ENCODE measurements at regions of chr5 and their contacts with region 1.

Region 1: DNA sequence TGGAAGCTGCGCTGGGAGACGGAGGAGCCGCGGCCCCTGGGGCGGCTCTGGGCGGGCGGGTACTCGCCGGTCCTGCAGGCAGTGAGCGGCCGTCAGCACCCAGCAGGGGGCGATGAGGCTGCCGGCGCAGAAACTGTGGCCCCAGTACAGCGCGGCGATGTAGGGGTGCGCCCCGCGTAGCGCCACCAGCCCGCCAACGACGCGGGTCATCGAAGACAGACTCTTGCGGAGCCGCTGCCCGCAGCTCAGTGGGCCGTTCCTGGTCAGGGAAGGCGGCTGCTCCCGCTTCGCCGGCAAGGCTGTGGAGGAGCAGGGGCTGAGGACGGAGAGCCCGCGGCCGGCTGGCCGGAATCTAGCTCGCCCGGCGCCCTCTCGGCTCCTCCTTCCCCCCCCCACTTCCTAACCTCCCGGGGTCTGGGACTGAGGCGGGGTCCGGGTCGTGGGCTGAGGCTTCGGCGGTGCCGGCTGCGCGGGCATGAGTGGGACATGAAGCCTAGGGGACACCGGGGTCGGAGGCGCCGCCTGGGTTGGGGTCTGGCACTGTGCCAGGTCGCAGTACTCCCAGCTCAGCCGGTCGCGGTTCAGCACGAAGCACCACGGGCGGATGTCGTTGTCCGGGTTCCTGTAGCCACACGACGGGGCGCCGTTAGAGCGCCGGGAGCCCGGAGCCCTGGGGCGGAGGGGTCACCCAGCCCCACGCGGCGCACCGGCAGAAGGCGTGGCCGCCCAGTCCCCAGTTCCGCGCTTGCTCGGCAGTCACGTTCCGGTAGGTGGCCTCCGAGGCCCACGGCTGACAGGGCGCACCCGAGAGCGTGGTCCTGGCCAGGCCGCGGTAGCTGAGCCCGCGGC is 3.6 kb upstream of the PFN3 start:
- DNase-seq: peak in 1 of 2 experiments; percentile 82
- H3K4me3 ChIP-seq: peak overlapping the region; percentile 9 to 65 (median 48); a peak in 7 of 8 replicates
- H3K27ac ChIP-seq: no peak overlapping the region
- H3K4me1 ChIP-seq: peaks cover 0 to 22% (median 14%) of the 10 kb centered on the region in 4 experiments; a peak in 5 of 7 replicates
- H3K27me3 ChIP-seq: peaks cover 22 to 68% (median 43%) of the 10 kb centered on the region in 4 experiments
- CTCF ChIP-seq: peak in 2 of 3 experiments; percentile 49 to 61; a peak in 3 of 4 replicates
- EP300 ChIP-seq: no peak
- POLR2A ChIP-seq: no peak
- RAD21 ChIP-seq: peak; percentile 48 to 74

Region 2: DNA sequence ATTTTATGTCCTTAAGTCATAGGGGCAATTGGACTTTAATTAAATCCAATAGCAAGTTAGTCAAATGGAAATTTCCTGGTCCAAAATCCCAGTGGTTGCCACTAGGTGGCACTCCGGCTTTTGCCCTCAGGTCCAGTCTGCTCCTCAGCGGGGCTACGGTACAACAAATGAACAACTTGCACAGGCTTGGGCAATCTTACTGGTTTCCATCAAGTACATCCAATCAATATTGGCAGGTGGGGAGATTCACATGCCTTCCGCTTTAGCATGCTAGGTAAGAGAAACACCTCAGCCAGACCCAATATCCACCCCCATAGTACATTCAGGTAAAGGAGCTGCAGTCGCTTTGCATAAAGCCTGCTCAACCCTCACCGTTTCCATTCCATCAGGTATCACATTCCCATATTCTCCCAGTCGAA is 86.0 kb before region 1 on chr5:
- CTCF ChIA-PET with region 1: interaction called, 31 read pairs
- POLR2A ChIA-PET with region 1: no interaction called
- DNase-seq: peak in 1 of 2 experiments; percentile 87
- H3K4me3 ChIP-seq: no peak overlapping the region
- H3K27ac ChIP-seq: no peak overlapping the region
- H3K4me1 ChIP-seq: peaks cover 0 to 4% (median 1%) of the 10 kb centered on the region in 4 experiments; a peak in 4 of 7 replicates
- H3K27me3 ChIP-seq: no peaks in the 10 kb centered on the region
- CTCF ChIP-seq: peak in 2 of 3 experiments; percentile 85 to 89; a peak in 3 of 4 replicates
- EP300 ChIP-seq: no peak
- POLR2A ChIP-seq: no peak
- RAD21 ChIP-seq: peak; percentile 87 to 90

Region 3: DNA sequence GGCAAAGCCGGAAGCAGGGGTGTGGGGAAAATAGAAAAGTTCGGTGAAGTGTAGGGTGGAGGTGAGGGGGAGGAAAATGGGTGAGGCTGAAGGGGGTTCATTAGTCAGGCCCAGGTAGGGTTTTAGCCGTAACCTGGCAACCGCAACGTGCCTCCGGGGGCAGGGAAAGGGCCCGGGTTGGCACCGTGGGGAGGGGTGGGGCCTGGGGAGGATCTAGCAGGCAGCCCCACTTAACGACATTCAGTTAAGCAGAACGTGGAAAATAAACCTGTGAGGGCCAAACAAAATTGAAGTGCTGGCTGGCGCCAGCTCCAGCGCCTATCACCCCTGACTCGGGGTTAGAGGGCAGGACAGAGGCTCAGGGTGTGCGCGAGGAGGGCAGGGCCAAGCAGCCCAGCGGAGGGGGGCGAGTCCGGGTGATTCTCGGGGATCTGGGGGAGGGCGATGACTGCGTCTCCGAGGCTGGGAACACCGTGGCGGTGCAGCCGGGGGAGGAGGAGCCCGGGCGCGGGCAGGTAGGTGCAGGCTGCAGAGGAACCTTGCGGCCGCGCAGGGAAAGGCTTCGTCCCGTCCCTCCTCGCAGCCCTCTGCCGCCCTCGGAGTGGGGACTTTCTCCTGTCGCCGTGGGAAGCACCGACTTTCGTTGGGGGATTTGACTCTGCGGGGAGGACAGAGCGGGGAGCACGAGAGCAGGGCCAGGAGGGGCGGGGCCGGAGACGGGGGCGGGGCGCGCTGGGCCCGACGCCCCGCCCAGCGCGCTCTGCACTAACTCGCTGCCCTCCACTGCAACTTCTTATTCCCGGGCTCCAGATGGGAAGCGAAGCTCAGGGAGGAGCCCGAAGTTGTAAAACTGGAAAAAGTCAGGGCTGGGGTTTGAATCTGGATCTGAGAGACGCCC is 41.2 kb before region 1 on chr5:
- CTCF ChIA-PET with region 1: interaction called, 20 read pairs
- POLR2A ChIA-PET with region 1: interaction called, 5 read pairs
- DNase-seq: peak in 1 of 2 experiments; percentile 89
- H3K4me3 ChIP-seq: peak overlapping the region; percentile 43 to 69 (median 48)
- H3K27ac ChIP-seq: no peak overlapping the region
- H3K4me1 ChIP-seq: peaks cover 2 to 27% (median 22%) of the 10 kb centered on the region in 4 experiments
- H3K27me3 ChIP-seq: peaks cover 0 to 11% (median 9%) of the 10 kb centered on the region in 4 experiments; a peak in 4 of 7 replicates
- CTCF ChIP-seq: no peak
- EP300 ChIP-seq: no peak
- POLR2A ChIP-seq: 0 out of 3 replicates have a peak, but pooled peaks of 1 of the 2 experiments have one; percentile 16
- RAD21 ChIP-seq: no peak

Region 4: DNA sequence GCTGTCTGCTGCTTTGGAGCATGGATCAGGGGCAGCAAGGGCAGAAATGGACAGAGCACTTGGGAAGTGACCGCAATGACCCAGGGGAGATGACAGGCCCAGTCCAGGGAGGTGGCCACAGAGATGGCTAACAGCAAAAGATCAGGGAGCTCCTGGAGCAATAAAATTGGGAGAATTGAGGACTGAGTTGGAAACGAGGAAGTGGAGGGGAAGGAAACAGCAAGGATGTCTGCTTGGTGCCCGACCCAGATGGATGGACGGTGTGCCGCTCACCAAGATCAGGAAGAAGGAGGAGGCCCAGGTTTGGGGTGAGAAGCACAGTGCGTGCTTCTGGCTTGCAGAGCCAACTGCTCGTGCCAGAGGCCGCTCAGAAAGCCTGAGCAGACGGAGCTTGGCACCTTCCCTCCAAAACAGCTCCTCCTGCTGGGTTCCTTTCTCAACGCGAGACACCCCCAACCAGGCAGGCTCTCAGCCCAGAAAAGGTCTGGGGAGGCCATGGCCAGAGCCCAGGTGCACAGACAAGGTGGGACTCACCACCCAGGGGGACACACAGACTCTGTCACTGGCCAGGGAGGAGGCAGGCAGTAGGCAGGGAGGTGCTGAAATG is 21.5 kb before region 1 on chr5:
- CTCF ChIA-PET with region 1: interaction called, 72 read pairs
- POLR2A ChIA-PET with region 1: interaction called, 4 read pairs
- DNase-seq: peak in 1 of 2 experiments; percentile 64
- H3K4me3 ChIP-seq: no peak overlapping the region
- H3K27ac ChIP-seq: no peak overlapping the region
- H3K4me1 ChIP-seq: peaks cover 0 to 12% (median 2%) of the 10 kb centered on the region in 4 experiments; a peak in 4 of 7 replicates
- H3K27me3 ChIP-seq: peaks cover 0 to 2% (median under 1%) of the 10 kb centered on the region in 4 experiments; a peak in 3 of 7 replicates
- CTCF ChIP-seq: peak in 2 of 3 experiments; percentile 37 to 59; a peak in 3 of 4 replicates
- EP300 ChIP-seq: no peak
- POLR2A ChIP-seq: no peak
- RAD21 ChIP-seq: peak; percentile 22 to 41; a peak in 2 of 4 replicates

Region 5: GRCh38 chr5:177419051-177419450 is 15.0 kb after region 1 on chr5:
- CTCF ChIA-PET with region 1: interaction called, 57 read pairs
- POLR2A ChIA-PET with region 1: interaction called, 8 read pairs
- DNase-seq: no peak
- H3K4me3 ChIP-seq: no peak overlapping the region
- H3K27ac ChIP-seq: no peak overlapping the region
- H3K4me1 ChIP-seq: no peaks in the 10 kb centered on the region; a peak in 1 of 7 replicates
- H3K27me3 ChIP-seq: no peaks in the 10 kb centered on the region
- CTCF ChIP-seq: no peak
- EP300 ChIP-seq: no peak
- POLR2A ChIP-seq: no peak
- RAD21 ChIP-seq: no peak

Region 6: GRCh38 chr5:177431317-177432142 is 27.5 kb after region 1 on chr5:
- CTCF ChIA-PET with region 1: interaction called, 57 read pairs
- POLR2A ChIA-PET with region 1: interaction called, 27 read pairs
- DNase-seq: no peak
- H3K4me3 ChIP-seq: no peak overlapping the region
- H3K27ac ChIP-seq: no peak overlapping the region
- H3K4me1 ChIP-seq: peaks cover 0 to 14% (median 9%) of the 10 kb centered on the region in 4 experiments; a peak in 5 of 7 replicates
- H3K27me3 ChIP-seq: no peaks in the 10 kb centered on the region
- CTCF ChIP-seq: no peak
- EP300 ChIP-seq: no peak
- POLR2A ChIP-seq: no peak
- RAD21 ChIP-seq: no peak

Region 7: GRCh38 chr5:177454397-177455035 is 50.5 kb after region 1 on chr5:
- CTCF ChIA-PET with region 1: interaction called, 343 read pairs
- POLR2A ChIA-PET with region 1: interaction called, 143 read pairs
- DNase-seq: peak in 1 of 2 experiments; percentile 98
- H3K4me3 ChIP-seq: peak overlapping the region; percentile 47 to 86 (median 81)
- H3K27ac ChIP-seq: peak overlapping the region; percentile 86; the same call in 1 of the 2 replicates
- H3K4me1 ChIP-seq: peaks cover 0 to 22% (median 10%) of the 10 kb centered on the region in 4 experiments; a peak in 6 of 7 replicates
- H3K27me3 ChIP-seq: peaks cover 0 to 10% (median 8%) of the 10 kb centered on the region in 4 experiments; a peak in 2 of 7 replicates
- CTCF ChIP-seq: peak in 2 of 3 experiments; percentile 82 to 88; a peak in 3 of 4 replicates
- EP300 ChIP-seq: peak in 1 of 2 experiments; percentile 67; a peak in 1 of 3 replicates
- POLR2A ChIP-seq: peak in 1 of 2 experiments; percentile 63; a peak in 1 of 3 replicates
- RAD21 ChIP-seq: peak; percentile 72 to 85

Region 8: DNA sequence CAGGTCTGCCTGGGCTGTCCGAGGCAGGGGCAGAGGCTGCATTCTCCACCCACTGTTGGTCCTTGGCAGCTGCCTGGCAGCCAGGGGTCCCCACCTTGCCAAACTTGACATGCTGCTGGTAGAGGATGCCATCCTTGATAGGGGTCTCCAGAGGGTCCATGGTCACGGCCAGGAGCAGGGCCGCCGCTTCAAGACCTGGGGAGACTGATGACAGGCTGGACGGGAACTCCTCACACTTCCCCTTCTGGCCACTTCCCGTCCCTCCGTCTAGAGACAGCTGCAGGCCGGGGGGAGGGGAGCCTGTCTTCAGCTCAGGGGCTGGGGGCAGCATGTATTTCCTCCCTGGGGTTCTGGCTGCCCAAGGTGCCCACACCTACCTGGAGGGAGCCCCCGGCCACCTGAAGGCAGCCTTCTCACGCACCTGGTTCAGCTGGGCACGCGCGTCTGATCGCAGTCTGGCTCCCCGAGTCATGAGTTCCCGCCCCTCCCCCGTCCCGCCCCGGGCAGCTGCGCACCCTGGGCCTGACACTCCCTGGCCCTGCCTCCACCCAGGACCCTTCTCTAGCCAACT is 105.5 kb after region 1 on chr5 and contains the start of gene DOK3:
- CTCF ChIA-PET with region 1: no interaction called
- POLR2A ChIA-PET with region 1: no interaction called
- DNase-seq: no peak
- H3K4me3 ChIP-seq: no peak within 1 kb of the TSS
- H3K27ac ChIP-seq: no peak within 1 kb of the TSS
- H3K4me1 ChIP-seq: peaks cover 0 to 12% (median 9%) of the 10 kb centered on the region in 4 experiments; a peak in 5 of 7 replicates
- H3K27me3 ChIP-seq: no peaks in the 10 kb centered on the region
- CTCF ChIP-seq: no peak
- EP300 ChIP-seq: no peak
- POLR2A ChIP-seq: no peak
- RAD21 ChIP-seq: no peak
- total RNA-seq, gene DOK3: 6.4 and 8.6 TPM in 2 replicates

Measured in H1 (cell line).